Activated CD4-positive, alpha-beta memory T cell treated with anti-CD3 and anti-CD28 coated beads for 36 hours (primary cell): ENCODE measurements at regions of chr1 and their contacts with region 1.

Region 1: DNA sequence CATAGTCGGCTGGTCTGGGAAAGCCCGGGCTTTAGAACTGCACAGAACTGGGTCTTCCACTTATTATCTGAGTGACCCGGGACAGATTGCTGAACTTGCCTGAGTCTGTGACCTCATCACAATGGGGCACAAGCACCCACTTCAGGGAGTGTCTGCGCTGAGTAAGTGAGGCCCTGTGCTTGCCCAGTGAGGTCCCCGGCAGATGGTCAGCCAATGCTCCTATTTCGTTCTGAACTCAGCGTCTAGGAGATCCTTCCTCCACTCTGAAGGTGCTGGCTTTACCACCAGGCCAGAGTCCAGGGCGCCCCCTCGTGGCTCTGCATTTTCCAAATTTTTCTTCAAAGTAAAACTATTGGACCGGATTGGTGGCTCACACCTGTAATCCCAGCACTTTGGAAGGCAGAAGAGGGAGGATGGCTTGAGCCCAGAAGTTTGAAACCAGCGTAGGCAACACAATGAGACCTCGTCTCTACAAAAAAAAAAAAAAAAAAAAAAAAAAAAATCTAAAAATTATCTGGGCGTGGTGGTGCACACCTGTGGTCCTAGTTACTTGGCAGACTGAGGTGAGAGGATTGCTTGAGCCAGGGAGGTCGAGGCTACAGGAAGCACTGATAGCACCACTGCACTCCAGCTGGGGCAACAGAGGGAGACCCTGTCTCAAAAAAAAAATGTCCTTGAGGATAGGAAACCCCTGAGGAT is 61.7 kb downstream of the FCRL5 start:
- DNase-seq: peak; percentile 75
- H3K4me3 Mint-ChIP-seq: no peak overlapping the region
- H3K27ac Mint-ChIP-seq: no peak overlapping the region
- H3K4me1 Mint-ChIP-seq: no peaks in the 10 kb centered on the region
- H3K27me3 Mint-ChIP-seq: peaks cover 19% of the 10 kb centered on the region

Region 2: DNA sequence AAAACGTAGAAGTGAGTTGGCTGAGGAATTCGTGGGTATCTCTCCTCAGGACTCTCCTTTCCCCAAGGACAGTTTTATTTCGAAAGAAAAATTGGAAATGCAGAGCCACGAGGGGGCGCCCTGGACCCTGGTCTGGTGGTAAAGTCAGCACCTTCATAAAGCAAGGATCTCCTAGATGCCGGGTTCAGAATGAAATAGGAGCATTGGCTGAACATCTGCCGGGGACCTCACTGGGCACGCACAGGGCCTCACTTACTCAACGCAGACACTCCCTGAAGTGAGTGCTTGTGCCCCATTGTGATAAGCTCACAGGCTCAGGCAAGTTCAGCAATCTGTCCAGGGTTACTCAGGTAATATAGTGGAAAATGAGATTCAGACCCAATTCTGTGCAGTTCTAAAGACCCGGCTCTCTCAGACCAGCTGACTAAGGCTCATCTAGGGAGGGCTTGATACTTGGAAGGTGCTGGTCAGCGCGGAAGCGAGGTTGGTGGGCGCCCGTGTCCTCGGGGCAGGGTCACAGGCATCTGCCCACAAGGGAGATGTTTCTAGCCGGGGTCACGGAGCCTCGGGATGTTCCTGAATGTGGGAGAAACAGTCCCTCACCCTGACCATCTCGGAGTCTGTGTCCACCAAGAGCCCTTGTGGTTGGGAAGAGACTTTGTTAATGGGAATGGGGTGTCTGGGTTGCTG is 296.8 kb before region 1 on chr1:
- CTCF ChIA-PET with region 1: interaction called, 15 read pairs
- POLR2A ChIA-PET with region 1: no interaction called
- intact Hi-C with region 1: loop called (anchors 1 kb)
- DNase-seq: peak; percentile 74
- H3K4me3 Mint-ChIP-seq: no peak overlapping the region
- H3K27ac Mint-ChIP-seq: no peak overlapping the region
- H3K4me1 Mint-ChIP-seq: peaks cover 3% of the 10 kb centered on the region
- H3K27me3 Mint-ChIP-seq: peaks cover 27% of the 10 kb centered on the region

Region 3: DNA sequence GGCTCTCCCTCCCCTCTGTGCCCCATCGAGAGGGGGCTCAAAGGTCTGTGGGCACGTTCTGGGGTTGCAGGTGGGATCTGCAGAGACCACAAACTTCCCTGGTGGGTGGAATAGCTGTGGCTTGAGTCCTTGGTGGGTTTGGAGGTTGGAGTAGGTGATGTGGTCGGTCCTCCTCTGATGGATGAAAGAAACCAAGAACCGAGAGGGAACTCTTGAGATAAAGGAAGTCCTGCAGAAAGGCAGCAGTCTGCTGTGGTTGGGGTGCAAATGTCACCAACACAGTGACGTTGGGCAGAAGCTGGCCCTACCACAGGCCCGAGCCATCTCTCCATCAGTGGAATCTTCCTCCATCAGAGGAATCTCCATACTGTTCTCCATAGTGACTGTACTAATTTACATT is 110.1 kb before region 1 on chr1:
- CTCF ChIA-PET with region 1: interaction called, 5 read pairs
- POLR2A ChIA-PET with region 1: interaction called, 3 read pairs
- intact Hi-C with region 1: loop called (anchors 1 kb)
- DNase-seq: no peak
- H3K4me3 Mint-ChIP-seq: no peak overlapping the region
- H3K27ac Mint-ChIP-seq: no peak overlapping the region
- H3K4me1 Mint-ChIP-seq: no peaks in the 10 kb centered on the region
- H3K27me3 Mint-ChIP-seq: peaks cover 15% of the 10 kb centered on the region

Region 4: DNA sequence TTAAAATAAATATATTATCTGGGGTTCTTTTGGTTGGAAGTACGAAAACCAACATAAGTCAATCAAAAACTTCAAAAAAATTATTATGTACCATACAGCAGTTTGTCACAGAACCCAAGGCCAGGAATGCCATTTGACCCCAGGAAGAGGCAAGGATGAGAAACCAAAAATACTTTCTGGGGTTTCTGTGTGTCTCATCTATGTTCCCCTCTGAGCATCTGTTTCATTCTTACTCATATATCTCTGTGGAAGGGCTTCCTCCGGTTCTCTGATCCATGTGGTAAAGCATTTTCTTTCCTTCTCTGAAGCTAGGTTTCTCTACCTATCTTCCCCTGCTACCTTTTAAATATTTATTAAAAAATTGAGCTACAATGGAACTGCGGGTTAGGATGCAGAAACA is 339.1 kb after region 1 on chr1:
- CTCF ChIA-PET with region 1: no interaction called
- POLR2A ChIA-PET with region 1: no interaction called
- intact Hi-C with region 1: no loop called
- DNase-seq: no peak
- H3K4me3 Mint-ChIP-seq: no peak overlapping the region
- H3K27ac Mint-ChIP-seq: no peak overlapping the region
- H3K4me1 Mint-ChIP-seq: no peaks in the 10 kb centered on the region
- H3K27me3 Mint-ChIP-seq: peaks cover 12% of the 10 kb centered on the region